Gastrocnemius medialis (tissue), 4 donors: ENCODE measurements at regions of chr7 and their contacts with region 1.

Region 1: DNA sequence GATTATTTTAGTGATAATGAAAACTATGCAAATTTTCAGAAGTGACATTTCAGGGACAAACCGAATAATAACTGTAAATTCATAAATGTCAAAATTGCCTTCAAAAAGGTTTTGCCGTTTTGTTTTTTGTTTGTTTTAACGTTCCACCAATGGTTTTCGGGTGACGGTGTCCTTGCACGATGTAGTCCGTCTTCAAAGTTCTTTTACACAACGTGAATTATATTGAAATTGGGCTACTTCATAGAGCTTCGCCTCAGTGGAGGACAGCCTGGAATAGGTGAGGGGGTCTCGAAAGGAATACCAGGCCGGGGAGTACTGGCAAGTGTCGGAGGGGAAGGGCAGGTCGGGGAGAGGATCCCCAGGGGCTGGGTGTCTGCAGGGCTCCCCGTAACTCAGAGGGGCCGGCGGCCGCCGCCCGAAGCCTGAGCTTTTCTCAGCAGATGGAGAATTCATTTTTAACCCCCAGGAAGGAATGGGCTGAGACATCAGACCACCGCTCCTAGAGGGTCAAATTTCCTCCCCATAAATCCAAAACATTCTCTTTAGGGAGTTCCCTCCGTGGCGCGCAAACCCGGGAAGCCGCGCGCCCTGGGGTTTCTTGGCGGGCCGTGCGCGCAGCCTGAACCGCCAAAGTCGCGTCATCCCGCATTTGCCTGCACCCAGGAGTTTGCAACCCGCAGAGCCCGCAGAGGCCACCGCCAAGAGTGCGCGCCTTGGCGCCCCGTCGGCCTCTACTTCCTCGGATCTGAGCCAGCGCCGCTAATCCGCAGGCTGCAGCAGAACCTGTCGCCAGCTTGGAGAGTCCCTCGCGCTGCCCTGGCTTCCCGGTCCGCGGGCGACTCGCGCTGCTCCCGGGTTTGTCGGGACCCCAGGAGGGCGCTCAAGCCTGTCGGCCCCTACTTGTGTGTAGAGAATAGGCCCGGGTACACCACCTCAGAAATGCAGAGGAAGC is 17.3 kb upstream of the EVX1 start:
- DNase-seq: no peak
- ATAC-seq: no peak
- H3K4me3 ChIP-seq: peak overlapping the region in 3 of 4 donors; percentile 14 to 46 (median 36)
- H3K27ac ChIP-seq: no peak overlapping the region
- H3K4me1 ChIP-seq: peaks cover 0 to 8% of the 10 kb centered on the region in 2 donors
- H3K27me3 ChIP-seq: peaks cover 43 to 56% (median 48%) of the 10 kb centered on the region in 3 donors
- CTCF ChIP-seq: no peak
- POLR2A ChIP-seq: no peak

Region 2: DNA sequence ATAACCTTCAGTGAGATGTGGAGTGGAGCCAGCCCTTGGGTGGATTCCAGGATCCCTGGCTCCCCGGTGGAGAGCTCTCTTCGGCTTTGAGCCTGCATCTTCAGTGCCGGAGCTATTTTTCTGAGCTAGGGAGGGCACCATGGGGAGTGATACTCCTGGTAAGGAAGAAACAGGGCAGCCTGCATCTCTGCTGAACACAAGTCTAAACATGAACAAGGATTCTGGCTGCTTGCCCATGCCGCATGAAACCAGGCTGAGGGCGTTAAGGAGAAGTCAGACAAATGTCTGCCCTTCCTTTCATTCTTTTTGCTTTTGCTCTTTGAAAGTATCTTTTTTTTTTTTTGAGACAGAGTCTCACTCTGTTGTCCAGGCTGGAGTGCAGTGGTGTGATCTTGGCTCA is 77.8 kb after region 1 on chr7:
- in situ Hi-C with region 1: no loop called
- intact Hi-C with region 1: no loop called
- DNase-seq: peak in 1 of 2 donors; percentile 14
- ATAC-seq: no peak
- H3K4me3 ChIP-seq: no peak overlapping the region
- H3K27ac ChIP-seq: no peak overlapping the region
- H3K4me1 ChIP-seq: peaks cover 2 to 7% of the 10 kb centered on the region in 2 donors
- H3K27me3 ChIP-seq: peaks cover 0 to 3% (median 0%) of the 10 kb centered on the region in 3 donors
- CTCF ChIP-seq: no peak
- POLR2A ChIP-seq: no peak

Region 3: DNA sequence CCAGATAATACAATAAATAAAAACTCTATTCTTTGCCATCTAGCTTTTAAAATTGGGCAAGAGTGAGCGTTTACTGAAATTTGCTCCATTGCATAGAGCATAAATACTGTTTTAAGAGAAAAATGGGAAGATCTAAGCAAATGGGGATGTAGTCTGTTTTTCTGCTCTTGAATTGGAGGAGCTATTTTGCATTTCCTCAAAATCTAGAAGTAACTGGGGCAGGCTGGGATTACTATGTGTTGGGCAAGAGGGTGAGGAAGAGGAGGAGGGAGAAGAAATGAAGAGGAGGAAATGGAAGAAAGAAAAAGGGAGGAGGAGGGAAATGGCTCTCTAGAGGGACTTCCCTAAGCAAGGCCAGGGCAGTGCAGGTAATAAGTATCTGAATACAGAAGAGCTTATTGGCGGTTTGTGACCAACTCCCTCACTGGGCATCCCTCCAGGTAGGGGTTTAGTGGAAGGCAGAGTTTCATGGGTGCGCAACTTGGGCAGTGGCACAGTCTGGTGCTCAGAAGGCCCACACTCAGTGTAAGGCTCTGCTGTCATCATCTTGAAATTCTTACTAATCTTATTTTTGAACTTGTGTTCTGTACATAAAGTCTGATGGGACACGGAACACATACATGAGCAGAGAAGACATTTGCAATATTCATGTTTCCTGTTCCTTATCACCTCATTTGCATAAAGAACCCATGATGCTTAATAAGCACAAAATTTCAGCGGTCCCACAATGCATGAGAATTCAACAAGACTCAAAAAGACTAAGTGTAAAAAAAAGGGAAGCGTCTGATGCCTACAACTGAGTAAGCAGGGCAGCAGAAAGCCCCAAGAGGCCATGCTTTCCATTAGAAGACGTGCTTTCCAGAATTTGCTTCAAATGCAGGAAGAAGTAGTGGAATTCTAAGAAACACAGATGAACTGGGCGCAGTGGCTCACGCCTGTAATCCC is 134.2 kb after region 1 on chr7:
- in situ Hi-C with region 1: no loop called
- intact Hi-C with region 1: no loop called
- DNase-seq: no peak
- ATAC-seq: no peak
- H3K4me3 ChIP-seq: no peak overlapping the region
- H3K27ac ChIP-seq: no peak overlapping the region
- H3K4me1 ChIP-seq: peaks cover 3 to 7% of the 10 kb centered on the region in 2 donors
- H3K27me3 ChIP-seq: peaks cover 0 to 2% (median 0%) of the 10 kb centered on the region in 3 donors
- CTCF ChIP-seq: no peak
- POLR2A ChIP-seq: no peak

Region 4: GRCh38 chr7:27560540-27561235 is 335.4 kb after region 1 on chr7:
- in situ Hi-C with region 1: loop called in 2 of 4 experiments (anchors 10 to 25 kb)
- intact Hi-C with region 1: no loop called
- DNase-seq: no peak
- ATAC-seq: no peak
- H3K4me3 ChIP-seq: no peak overlapping the region
- H3K27ac ChIP-seq: no peak overlapping the region
- H3K4me1 ChIP-seq: no peaks in the 10 kb centered on the region
- H3K27me3 ChIP-seq: no peaks in the 10 kb centered on the region
- CTCF ChIP-seq: no peak
- POLR2A ChIP-seq: no peak